ENCODE measurements at regions of chr2 and their contacts with region 1.

Region 1: DNA sequence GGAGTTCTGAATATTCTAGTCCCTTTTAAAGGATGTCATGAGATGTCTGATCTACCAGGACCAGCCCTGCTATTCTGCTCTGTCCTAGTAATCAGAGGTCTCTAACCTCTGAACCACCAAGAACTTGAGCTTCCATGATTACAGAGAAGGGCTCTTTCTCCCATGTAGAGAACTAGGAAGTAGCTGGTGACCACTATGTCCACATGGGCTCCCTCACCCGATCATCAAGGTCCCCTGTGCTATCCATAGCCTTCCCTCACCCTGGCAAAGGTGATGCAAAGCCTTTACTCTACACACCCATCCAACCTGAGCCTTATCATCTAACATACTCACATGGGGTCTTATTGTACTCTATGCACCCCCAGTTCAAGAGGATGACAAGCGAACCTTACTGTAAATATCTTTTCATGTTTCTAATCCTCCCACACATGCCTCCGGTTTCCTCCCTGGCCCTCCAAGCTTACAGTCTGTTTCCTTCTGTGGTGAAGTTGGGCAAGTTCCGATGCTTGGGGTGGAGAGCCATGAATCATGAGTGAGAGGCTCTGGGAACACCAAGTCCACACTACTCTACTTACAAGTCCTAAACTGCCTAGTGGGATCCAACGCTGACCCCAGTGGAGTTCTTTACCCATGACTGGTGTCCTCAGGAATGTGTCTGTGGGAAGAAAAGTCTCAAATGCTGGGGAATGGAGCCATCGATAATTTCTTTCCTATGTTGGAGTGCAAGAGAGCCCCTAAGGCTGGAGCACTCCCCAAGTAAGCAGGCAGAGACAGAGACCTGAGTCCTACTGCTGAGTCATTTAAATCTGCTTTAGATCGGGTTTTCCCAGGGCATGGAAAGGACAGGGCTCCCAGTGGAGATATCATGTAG is 73.3 kb upstream of the KLF7 start:
- DNase-seq: peak; percentile 73
- H3K4me3 Mint-ChIP-seq: no peak overlapping the region
- H3K27ac Mint-ChIP-seq: peak overlapping the region; percentile 2
- H3K4me1 Mint-ChIP-seq: peaks cover 30% of the 10 kb centered on the region
- H3K27me3 Mint-ChIP-seq: no peaks in the 10 kb centered on the region

Region 2: DNA sequence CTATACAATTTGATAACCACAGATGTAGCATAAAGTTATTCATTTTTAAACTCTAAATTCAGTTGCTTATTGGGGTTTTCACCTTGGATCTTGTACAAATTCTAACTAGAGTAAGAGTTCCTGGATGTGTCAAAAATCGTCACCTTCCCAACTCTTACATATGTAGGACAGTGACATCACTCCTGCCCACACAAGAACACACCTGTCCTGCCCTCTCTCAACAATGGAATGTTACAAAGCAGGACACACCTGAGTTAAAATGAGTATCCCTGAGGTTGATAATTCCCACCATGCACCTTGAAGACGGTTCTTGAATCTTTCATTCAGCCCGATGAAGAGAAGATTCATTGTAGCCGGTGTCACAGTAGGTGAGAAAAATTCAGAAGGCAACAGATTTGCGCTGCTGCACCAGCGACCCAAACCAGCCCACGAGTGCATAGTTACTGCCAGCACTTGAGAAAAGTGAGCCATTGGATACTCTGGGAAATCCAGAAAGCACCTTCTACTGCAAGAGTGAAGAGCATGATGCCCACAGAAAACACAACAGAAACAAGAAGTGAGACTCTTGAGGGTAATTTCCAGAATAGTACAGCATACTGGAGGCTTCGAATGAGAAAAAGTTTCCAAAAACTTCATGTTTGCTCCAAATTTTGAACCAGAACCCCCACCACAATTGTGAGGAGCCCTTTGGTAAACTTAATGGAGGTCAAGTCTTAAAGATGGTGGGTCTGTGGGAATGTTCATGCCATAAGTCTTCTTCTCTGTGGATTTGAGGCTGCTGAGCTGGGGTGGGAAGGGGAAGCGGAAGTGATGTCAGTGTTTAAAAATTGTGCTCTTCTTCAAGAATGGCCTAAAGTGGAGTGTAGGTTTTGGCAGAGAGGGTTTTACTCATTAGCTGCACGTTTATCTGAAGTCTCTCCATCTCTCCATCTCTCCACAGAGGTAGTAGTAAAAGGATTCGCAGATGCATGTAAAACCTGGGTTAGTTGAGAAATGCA is 830.4 kb before region 1 on chr2:
- CTCF ChIA-PET with region 1: no interaction called
- intact Hi-C with region 1: no loop called
- DNase-seq: no peak
- H3K4me3 Mint-ChIP-seq: no peak overlapping the region
- H3K27ac Mint-ChIP-seq: no peak overlapping the region
- H3K4me1 Mint-ChIP-seq: no peaks in the 10 kb centered on the region
- H3K27me3 Mint-ChIP-seq: peaks cover 5% of the 10 kb centered on the region

Region 3: GRCh38 chr2:207073801-207074678 is 165.0 kb before region 1 on chr2:
- CTCF ChIA-PET with region 1: no interaction called
- intact Hi-C with region 1: loop called (anchors 5 kb)
- DNase-seq: peak; percentile 72
- H3K4me3 Mint-ChIP-seq: peak overlapping the region; percentile 64
- H3K27ac Mint-ChIP-seq: peak overlapping the region; percentile 85
- H3K4me1 Mint-ChIP-seq: peaks cover 27% of the 10 kb centered on the region
- H3K27me3 Mint-ChIP-seq: no peaks in the 10 kb centered on the region

Region 4: GRCh38 chr2:207288628-207289027 is 49.6 kb after region 1 on chr2:
- CTCF ChIA-PET with region 1: no interaction called
- intact Hi-C with region 1: loop called (anchors 1 kb)
- DNase-seq: peak; percentile 84
- H3K4me3 Mint-ChIP-seq: no peak overlapping the region
- H3K27ac Mint-ChIP-seq: peak overlapping the region; percentile 33
- H3K4me1 Mint-ChIP-seq: peaks cover 73% of the 10 kb centered on the region
- H3K27me3 Mint-ChIP-seq: no peaks in the 10 kb centered on the region

Region 5: GRCh38 chr2:208929139-208929864 is 1690.2 kb after region 1 on chr2:
- CTCF ChIA-PET with region 1: no interaction called
- intact Hi-C with region 1: no loop called
- DNase-seq: no peak
- H3K4me3 Mint-ChIP-seq: no peak overlapping the region
- H3K27ac Mint-ChIP-seq: no peak overlapping the region
- H3K4me1 Mint-ChIP-seq: no peaks in the 10 kb centered on the region
- H3K27me3 Mint-ChIP-seq: no peaks in the 10 kb centered on the region